IMR-90 (cell line): ENCODE measurements at regions of chr2 and their contacts with region 1.

Region 1: GRCh38 chr2:85551698-85552678 is 9.3 kb downstream of the GGCX start:
- DNase-seq: peak; percentile 74
- ATAC-seq: peak; percentile 24; the same call in 1 of the 2 replicates
- H3K4me3 ChIP-seq: no peak overlapping the region
- H3K27ac ChIP-seq: peak overlapping the region; percentile 98; the same call in 1 of the 2 replicates
- H3K4me1 ChIP-seq: peaks cover 18% of the 10 kb centered on the region
- H3K27me3 ChIP-seq: no peaks in the 10 kb centered on the region
- CTCF ChIP-seq: peak; percentile 89
- POLR2A ChIP-seq: 0 out of 2 replicates have a peak, but pooled peaks have one; percentile 23
- RAD21 ChIP-seq: peak; percentile 95

Region 2: GRCh38 chr2:85066874-85067351 is 485.1 kb before region 1 on chr2:
- CTCF ChIA-PET with region 1: interaction called, 5 read pairs
- POLR2A ChIA-PET with region 1: no interaction called
- dilution Hi-C with region 1: no loop called
- in situ Hi-C with region 1: loop called (anchors 10 kb)
- intact Hi-C with region 1: no loop called
- DNase-seq: peak; percentile 84
- ATAC-seq: peak; percentile 96
- H3K4me3 ChIP-seq: peak overlapping the region; percentile 27; the same call in 1 of the 2 replicates
- H3K27ac ChIP-seq: no peak overlapping the region
- H3K4me1 ChIP-seq: no peaks in the 10 kb centered on the region
- H3K27me3 ChIP-seq: peaks cover 6% of the 10 kb centered on the region; the same call in 1 of the 2 replicates
- CTCF ChIP-seq: peak; percentile 88
- POLR2A ChIP-seq: 0 out of 2 replicates have a peak, but pooled peaks have one; percentile 32
- RAD21 ChIP-seq: peak; percentile 92

Region 3: GRCh38 chr2:85327822-85328617 is 224.0 kb before region 1 on chr2 and contains the start of gene TGOLN2:
- CTCF ChIA-PET with region 1: no interaction called
- POLR2A ChIA-PET with region 1: interaction called, 3 read pairs
- dilution Hi-C with region 1: no loop called
- in situ Hi-C with region 1: no loop called
- intact Hi-C with region 1: loop called (anchors 5 kb)
- DNase-seq: peak; percentile 85
- ATAC-seq: peak; percentile 97
- H3K4me3 ChIP-seq: peak within 1 kb of the TSS; percentile 57
- H3K27ac ChIP-seq: peak within 1 kb of the TSS; percentile 90
- H3K4me1 ChIP-seq: peaks cover 7% of the 10 kb centered on the region
- H3K27me3 ChIP-seq: no peaks in the 10 kb centered on the region
- CTCF ChIP-seq: no peak
- POLR2A ChIP-seq: peak; percentile 97
- RAD21 ChIP-seq: no peak
- total RNA-seq, gene TGOLN2: 57.7 and 61.7 TPM in 2 replicates

Region 4: DNA sequence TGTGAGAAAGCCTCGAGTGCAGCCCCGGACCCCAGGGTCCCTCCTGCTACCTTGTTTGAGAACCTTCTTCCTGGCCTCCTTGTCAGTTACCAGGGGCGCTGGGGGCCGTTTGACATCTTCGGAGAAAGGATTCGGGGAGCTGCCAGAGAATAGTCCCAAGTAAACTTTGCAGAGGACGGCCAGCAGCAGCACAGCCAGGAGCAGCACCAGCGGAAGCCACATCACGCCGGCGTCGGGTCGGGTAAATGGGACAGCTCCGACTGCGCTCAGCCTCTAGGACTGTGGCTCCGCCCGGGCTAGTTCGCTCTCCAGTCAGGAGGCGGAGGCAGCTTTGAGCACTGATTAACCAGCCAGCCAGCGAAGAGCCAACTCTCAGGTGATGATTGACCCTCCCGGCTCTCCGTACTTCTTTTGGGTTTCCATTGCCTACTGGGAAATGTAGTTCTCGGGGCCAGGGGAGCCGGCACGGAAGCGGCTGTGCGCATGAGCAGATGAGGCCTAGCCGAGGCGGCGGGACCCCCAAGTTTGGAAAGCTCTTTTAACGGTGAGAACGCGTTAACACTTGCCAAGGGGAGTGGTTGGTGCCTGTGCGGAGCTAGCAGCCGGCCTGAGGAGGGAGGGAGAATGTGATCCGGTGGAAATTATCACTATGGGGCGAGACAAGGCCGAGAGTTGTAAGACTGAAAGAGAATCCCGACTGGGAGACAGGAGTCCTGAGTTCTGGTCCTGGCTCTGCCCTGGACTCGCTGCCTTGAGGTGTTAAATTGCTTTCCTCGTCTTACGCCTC is 197.5 kb before region 1 on chr2 and contains the starts of genes ELMOD3 and RETSAT:
- CTCF ChIA-PET with region 1: no interaction called
- POLR2A ChIA-PET with region 1: no interaction called
- dilution Hi-C with region 1: no loop called
- in situ Hi-C with region 1: no loop called
- intact Hi-C with region 1: loop called (anchors 1 kb)
- DNase-seq: peak; percentile 100
- ATAC-seq: peak; percentile 99
- H3K4me3 ChIP-seq: peak within 1 kb of the TSS; percentile 64
- H3K27ac ChIP-seq: peak within 1 kb of the TSS; percentile 87
- H3K4me1 ChIP-seq: peaks cover 6% of the 10 kb centered on the region
- H3K27me3 ChIP-seq: no peaks in the 10 kb centered on the region
- CTCF ChIP-seq: no peak
- POLR2A ChIP-seq: peak; percentile 98
- RAD21 ChIP-seq: no peak
- total RNA-seq, gene ELMOD3: 10.8 and 13.1 TPM in 2 replicates
- total RNA-seq, gene RETSAT: 25.0 and 32.3 TPM in 2 replicates

Region 5: DNA sequence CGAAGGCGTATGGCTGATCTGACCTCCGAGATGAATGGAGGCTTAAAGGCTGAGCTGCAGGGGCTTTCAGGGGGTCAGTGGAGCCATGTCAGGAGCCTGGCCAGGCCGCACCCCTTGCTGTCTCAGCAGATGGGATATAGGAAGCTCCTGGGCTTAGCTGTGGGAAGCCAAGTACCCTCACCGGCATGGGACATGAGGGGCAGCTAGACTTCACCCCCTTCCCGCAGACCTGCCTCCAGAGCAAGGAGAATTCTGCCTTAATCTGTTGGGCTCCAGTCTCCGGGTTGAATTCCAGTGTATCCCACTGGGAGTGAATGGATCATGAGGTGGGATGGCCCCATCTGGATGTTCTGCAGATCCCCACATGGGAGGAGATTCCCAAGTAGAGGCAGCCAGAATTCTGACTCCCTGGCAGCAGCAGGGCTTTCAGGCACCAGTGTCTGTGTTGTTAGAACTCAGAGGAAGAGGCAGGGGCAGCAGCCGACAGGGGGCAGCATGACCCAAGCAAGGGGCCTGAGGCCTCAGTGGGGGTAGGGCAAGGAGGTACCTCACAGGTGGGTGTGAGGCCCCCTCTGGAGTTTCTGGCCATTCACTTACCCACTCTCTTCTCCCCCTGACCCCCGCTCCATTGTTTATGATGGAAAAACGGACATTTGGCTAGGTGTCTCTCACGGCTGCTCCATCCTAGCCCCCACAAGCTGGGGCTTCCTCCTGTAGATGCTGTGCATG is 160.9 kb before region 1 on chr2:
- CTCF ChIA-PET with region 1: no interaction called
- POLR2A ChIA-PET with region 1: no interaction called
- dilution Hi-C with region 1: no loop called
- in situ Hi-C with region 1: no loop called
- intact Hi-C with region 1: loop called (anchors 1 kb)
- DNase-seq: peak; percentile 23
- ATAC-seq: peak; percentile 77
- H3K4me3 ChIP-seq: no peak overlapping the region
- H3K27ac ChIP-seq: no peak overlapping the region
- H3K4me1 ChIP-seq: peaks cover 4% of the 10 kb centered on the region
- H3K27me3 ChIP-seq: no peaks in the 10 kb centered on the region
- CTCF ChIP-seq: peak; percentile 61
- POLR2A ChIP-seq: no peak
- RAD21 ChIP-seq: peak; percentile 75

Region 6: GRCh38 chr2:85420536-85421259 is 131.3 kb before region 1 on chr2:
- CTCF ChIA-PET with region 1: interaction called, 46 read pairs
- POLR2A ChIA-PET with region 1: interaction called, 12 read pairs
- dilution Hi-C with region 1: no loop called
- in situ Hi-C with region 1: loop called (anchors 5 kb)
- intact Hi-C with region 1: loop called (anchors 1 kb)
- DNase-seq: peak; percentile 77
- ATAC-seq: peak; percentile 77
- H3K4me3 ChIP-seq: no peak overlapping the region
- H3K27ac ChIP-seq: peak overlapping the region; percentile 85
- H3K4me1 ChIP-seq: peaks cover 23% of the 10 kb centered on the region
- H3K27me3 ChIP-seq: no peaks in the 10 kb centered on the region
- CTCF ChIP-seq: peak; percentile 97
- POLR2A ChIP-seq: no peak; the same call in 1 of the 2 replicates
- RAD21 ChIP-seq: peak; percentile 100